CD8-positive, alpha-beta memory T cell (primary cell): ENCODE measurements at regions of chr17 and their contacts with region 1.

Region 1: DNA sequence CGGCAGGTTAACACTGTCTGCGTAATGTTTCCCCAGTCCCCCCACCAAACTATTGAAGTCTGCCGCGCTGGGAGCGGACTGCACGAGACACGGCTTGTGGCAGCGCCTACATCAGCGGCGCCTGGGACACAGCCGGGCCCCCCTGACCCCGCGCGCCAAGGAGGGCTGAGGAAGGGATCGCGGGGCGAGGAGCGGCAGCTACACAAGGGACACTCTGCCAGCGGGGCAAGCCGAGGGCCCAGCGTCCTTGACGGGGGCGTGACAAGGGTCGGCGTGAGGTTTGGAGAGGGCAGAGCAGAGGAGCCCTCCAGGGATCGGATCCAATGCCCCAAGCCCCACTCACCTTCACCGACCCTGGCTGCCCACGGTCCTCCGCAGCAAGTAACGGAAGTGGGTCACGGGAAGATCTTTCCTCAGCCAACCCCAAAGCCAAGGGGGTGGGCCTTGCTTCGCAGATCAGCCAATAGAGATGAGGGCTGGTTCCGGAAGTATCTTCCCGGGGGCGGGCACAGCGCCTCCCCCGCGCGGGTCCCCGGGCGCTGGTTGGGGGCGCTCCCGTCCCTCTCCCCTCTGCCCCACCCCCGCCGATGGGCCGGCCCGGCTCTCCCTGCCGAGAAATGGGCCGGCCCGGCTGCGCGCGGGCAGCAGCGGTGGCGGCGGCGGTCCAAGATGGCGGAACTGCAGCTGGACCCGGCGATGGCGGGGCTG is at the starts of genes ATP5PD and KCTD2:
- DNase-seq: peak; percentile 91 to 95 (median 91)
- H3K4me3 ChIP-seq: peak within 1 kb of the TSS; percentile 84
- H3K4me3 Mint-ChIP-seq: peak within 1 kb of the TSS; percentile 95 to 99 (median 97)
- H3K27ac ChIP-seq: peak within 1 kb of the TSS; percentile 94
- H3K27ac Mint-ChIP-seq: peak within 1 kb of the TSS; percentile 95 to 99 (median 98)
- H3K4me1 ChIP-seq: peaks cover 18% of the 10 kb centered on the region
- H3K4me1 Mint-ChIP-seq: peaks cover 36 to 54% (median 51%) of the 10 kb centered on the region in 3 donors
- H3K27me3 ChIP-seq: no peaks in the 10 kb centered on the region
- H3K27me3 Mint-ChIP-seq: no peaks in the 10 kb centered on the region
- total RNA-seq, gene ATP5PD: 179 to 198 TPM
- total RNA-seq, gene KCTD2: 22.2 to 23.8 TPM

Region 2: GRCh38 chr17:75034236-75034908 is 12.4 kb before region 1 on chr17:
- CTCF ChIA-PET with region 1: interaction called, 10 read pairs
- POLR2A ChIA-PET with region 1: interaction called, 14 read pairs
- DNase-seq: peak; percentile 56 to 82 (median 70)
- H3K4me3 ChIP-seq: peak overlapping the region; percentile 81
- H3K4me3 Mint-ChIP-seq: peak overlapping the region; percentile 91 to 96 (median 92)
- H3K27ac ChIP-seq: peak overlapping the region; percentile 62
- H3K27ac Mint-ChIP-seq: peak overlapping the region; percentile 90 to 99 (median 97)
- H3K4me1 ChIP-seq: peaks cover 50% of the 10 kb centered on the region
- H3K4me1 Mint-ChIP-seq: peaks cover 38 to 61% (median 60%) of the 10 kb centered on the region in 3 donors
- H3K27me3 ChIP-seq: no peaks in the 10 kb centered on the region
- H3K27me3 Mint-ChIP-seq: peaks cover 0 to 16% of the 10 kb centered on the region in 2 donors